ENCODE measurements at regions of chr22 and their contacts with region 1.

Region 1: GRCh38 chr22:30667494-30668385 is at the start of gene DUSP18:
- DNase-seq: peak; percentile 90
- H3K4me3 Mint-ChIP-seq: peak within 1 kb of the TSS; percentile 89
- H3K27ac Mint-ChIP-seq: peak within 1 kb of the TSS; percentile 61
- H3K4me1 Mint-ChIP-seq: peaks cover 12% of the 10 kb centered on the region
- H3K27me3 Mint-ChIP-seq: no peaks in the 10 kb centered on the region
- CTCF ChIP-seq: peak; percentile 26
- total RNA-seq, gene DUSP18: 5.6 and 6.5 TPM in 2 replicates

Region 2: GRCh38 chr22:30634471-30635233 is 33.1 kb before region 1 on chr22:
- CTCF ChIA-PET with region 1: interaction called, 8 read pairs
- POLR2A ChIA-PET with region 1: interaction called, 6 read pairs
- intact Hi-C with region 1: loop called (anchors 1 kb)
- DNase-seq: peak; percentile 90
- H3K4me3 Mint-ChIP-seq: peak overlapping the region; percentile 70
- H3K27ac Mint-ChIP-seq: no peak overlapping the region
- H3K4me1 Mint-ChIP-seq: no peaks in the 10 kb centered on the region
- H3K27me3 Mint-ChIP-seq: no peaks in the 10 kb centered on the region
- CTCF ChIP-seq: peak; percentile 93